Cardiac septum (tissue), 1 donor: ENCODE measurements at regions of chr13 and their contacts with region 1.

Region 1: GRCh38 chr13:27424246-27425157 is at the start of gene GTF3A:
- DNase-seq: peak; percentile 93
- total RNA-seq, gene GTF3A: 167 TPM

Region 2: GRCh38 chr13:26971990-26972887 is 452.3 kb before region 1 on chr13:
- intact Hi-C with region 1: no loop called
- DNase-seq: no peak

Region 3: DNA sequence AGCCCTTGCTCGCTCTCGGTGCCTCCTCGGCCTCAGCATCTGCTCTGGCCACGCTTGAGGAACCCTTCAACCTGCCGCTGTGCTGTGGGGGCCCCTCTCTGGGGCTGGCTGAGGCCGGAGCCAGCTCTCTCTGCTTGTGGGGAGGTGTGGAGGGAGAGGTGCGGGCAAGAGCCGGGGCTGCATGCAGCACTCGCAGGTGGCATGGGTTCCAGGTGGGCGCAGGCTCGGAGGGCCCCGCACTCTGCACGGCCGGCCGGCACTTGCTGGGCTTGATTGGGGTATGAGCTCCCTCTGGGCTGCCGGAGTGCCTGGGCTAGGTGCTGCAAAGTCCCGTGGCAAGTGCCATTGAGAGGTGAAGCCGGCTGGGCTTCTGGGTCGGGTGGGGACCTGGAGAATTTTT is 204.9 kb before region 1 on chr13:
- intact Hi-C with region 1: no loop called
- DNase-seq: no peak

Region 4: GRCh38 chr13:27251166-27252091 is 173.1 kb before region 1 on chr13 and contains the start of gene RPL21:
- intact Hi-C with region 1: loop called (anchors 10 kb)
- DNase-seq: peak; percentile 97
- total RNA-seq, gene RPL21: 512 TPM

Region 5: GRCh38 chr13:27449936-27450828 is 25.7 kb after region 1 on chr13 and contains the start of gene MTIF3:
- intact Hi-C with region 1: loop called (anchors 1 kb)
- DNase-seq: peak; percentile 95
- total RNA-seq, gene MTIF3: 83.8 TPM

Region 6: GRCh38 chr13:27620377-27621115 is 196.0 kb after region 1 on chr13 and contains the start of gene LNX2:
- intact Hi-C with region 1: loop called (anchors 5 kb)
- DNase-seq: peak; percentile 99
- total RNA-seq, gene LNX2: 15.8 TPM